ENCODE measurements at regions of chr12 and their contacts with region 1.

Region 1: GRCh38 chr12:11015775-11016430 is 6.5 kb downstream of the TAS2R19 start:
- DNase-seq: no peak
- H3K4me3 Mint-ChIP-seq: no peak overlapping the region
- H3K27ac Mint-ChIP-seq: no peak overlapping the region
- H3K4me1 Mint-ChIP-seq: no peaks in the 10 kb centered on the region
- H3K27me3 Mint-ChIP-seq: no peaks in the 10 kb centered on the region
- CTCF ChIP-seq: no peak

Region 2: DNA sequence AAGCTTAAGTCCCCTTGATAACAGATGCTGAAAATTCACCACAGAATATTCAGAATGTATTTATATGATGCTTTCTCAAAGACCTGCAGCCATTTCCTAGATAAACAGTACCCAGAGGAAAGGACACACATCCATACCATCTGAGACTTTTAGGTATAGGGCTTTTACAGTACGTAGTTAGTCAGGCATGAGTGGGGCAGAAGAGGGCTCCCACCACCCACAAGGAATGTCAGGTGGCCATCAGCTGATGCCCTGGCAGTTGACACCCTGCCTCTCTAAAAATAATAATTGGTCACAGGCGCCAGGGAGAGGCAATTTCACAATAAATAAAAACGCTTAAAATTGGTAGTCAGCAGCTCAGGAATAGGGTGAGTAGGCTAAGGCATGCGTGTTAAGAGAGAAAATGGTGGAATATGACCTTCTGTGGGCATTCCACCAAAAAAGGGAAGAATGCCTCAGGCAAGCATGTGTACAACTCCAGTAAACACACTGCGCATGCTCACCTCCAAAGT is 54.0 kb after region 1 on chr12:
- CTCF ChIA-PET with region 1: no interaction called
- POLR2A ChIA-PET with region 1: no interaction called
- intact Hi-C with region 1: loop called (anchors 1 kb)
- DNase-seq: no peak
- H3K4me3 Mint-ChIP-seq: no peak overlapping the region
- H3K27ac Mint-ChIP-seq: no peak overlapping the region
- H3K4me1 Mint-ChIP-seq: no peaks in the 10 kb centered on the region
- H3K27me3 Mint-ChIP-seq: no peaks in the 10 kb centered on the region
- CTCF ChIP-seq: no peak

Region 3: GRCh38 chr12:11307143-11307542 is 291.2 kb after region 1 on chr12:
- CTCF ChIA-PET with region 1: no interaction called
- POLR2A ChIA-PET with region 1: no interaction called
- intact Hi-C with region 1: no loop called
- DNase-seq: peak; percentile 8
- H3K4me3 Mint-ChIP-seq: no peak overlapping the region
- H3K27ac Mint-ChIP-seq: no peak overlapping the region
- H3K4me1 Mint-ChIP-seq: no peaks in the 10 kb centered on the region
- H3K27me3 Mint-ChIP-seq: no peaks in the 10 kb centered on the region
- CTCF ChIP-seq: no peak

Measured in MCF 10A (cell line).